Ascending aorta (tissue), 2 donors: ENCODE measurements at regions of chr11 and their contacts with region 1.

Region 1: DNA sequence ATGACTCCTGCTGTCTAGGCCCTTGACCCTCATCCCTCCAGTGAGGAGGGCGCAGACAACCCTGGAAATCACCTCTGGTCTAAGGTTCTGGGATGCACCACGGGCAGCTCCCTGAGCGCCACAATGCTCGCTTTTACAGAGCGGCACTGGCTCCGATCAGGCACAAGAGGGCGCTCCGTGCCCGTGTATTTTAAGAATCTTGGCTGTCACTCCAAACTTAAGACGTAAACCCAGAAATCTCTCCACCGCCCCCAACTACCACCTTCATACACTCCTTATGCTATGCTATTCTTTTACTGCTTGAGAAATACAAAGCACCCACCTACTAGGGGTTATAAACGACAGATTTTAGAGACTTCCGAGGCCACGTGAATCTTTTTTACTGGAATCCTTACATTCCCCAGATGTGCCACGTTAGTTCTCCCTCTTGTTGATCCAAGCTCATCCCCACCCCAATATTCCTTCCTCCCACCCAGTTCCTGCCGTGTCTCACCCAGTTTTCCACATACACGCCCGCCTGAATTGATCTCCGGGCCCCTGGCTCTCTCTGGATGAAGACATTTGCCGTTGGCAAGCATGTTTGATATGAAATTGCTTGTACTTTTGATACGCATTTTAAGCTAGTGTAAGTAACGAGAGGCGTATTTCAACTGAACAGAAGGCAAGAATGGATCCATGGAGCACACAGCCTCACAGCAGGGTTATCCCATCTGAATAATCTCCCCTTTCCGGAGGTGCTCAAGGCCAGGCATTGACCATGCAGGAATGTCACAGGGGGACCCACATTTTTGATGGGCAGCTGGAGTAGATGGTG is 453.5 kb downstream of the OPCML start:
- DNase-seq: no peak
- H3K4me3 ChIP-seq: no peak overlapping the region
- H3K27ac ChIP-seq: no peak overlapping the region
- H3K4me1 ChIP-seq: no peaks in the 10 kb centered on the region
- H3K27me3 ChIP-seq: no peaks in the 10 kb centered on the region
- CTCF ChIP-seq: peak; percentile 20 to 66 (median 44)

Region 2: GRCh38 chr11:133834682-133835592 is 756.1 kb after region 1 on chr11:
- intact Hi-C with region 1: loop called (anchors 5 kb)
- DNase-seq: no peak
- H3K4me3 ChIP-seq: no peak overlapping the region
- H3K27ac ChIP-seq: no peak overlapping the region
- H3K4me1 ChIP-seq: no peaks in the 10 kb centered on the region
- H3K27me3 ChIP-seq: no peaks in the 10 kb centered on the region
- CTCF ChIP-seq: peak; percentile 28 to 63 (median 38)